Sigmoid colon (tissue), 7 donors: ENCODE measurements at regions of chr18 and their contacts with region 1.

Region 1: DNA sequence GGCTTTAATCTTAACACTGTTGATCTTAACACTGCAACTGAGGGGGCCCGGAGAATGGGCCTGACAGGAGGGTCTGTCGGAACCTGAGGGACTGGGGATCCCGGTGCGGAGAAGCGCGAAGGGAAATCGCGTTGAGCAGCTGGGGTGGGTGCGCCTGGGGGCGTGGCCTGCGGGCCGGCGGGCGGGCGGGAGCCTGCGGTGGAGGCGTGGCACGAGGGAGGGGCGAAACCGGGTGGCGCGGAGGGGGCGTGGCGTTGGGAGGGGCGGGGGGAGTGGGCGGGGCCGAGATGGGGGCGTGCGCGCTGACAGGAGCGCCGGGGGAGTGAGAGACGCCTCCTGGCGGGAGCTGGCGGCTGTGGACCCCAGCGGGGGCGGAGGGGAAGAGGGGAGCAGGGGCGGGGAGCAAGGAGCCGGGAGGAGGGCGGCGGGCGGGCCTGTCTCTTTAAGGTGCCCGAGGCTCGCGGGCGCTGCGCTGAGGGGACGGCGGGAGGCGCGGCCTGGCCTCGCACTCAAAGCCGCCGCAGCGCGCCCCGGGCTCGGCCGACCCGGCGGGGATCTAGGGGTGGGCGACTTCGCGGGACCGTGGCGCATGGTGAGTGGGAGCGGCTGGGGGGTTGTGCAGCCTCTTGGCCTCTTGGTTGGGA is at the start of gene TWSG1:
- DNase-seq: peak; percentile 98
- H3K4me3 ChIP-seq: peak within 1 kb of the TSS; percentile 76 to 98 (median 94)
- H3K27ac ChIP-seq: peak within 1 kb of the TSS; percentile 96 to 99 (median 97)
- H3K4me1 ChIP-seq: peaks cover 0 to 34% (median 19%) of the 10 kb centered on the region in 4 donors
- H3K27me3 ChIP-seq: no peaks in the 10 kb centered on the region
- CTCF ChIP-seq: peak in 2 of 4 experiments; percentile 9 to 52
- EP300 ChIP-seq: no peak
- POLR2A ChIP-seq: peak; percentile 32 to 41
- total RNA-seq, gene TWSG1: 69.2 to 88.3 (median 79.1) TPM

Region 2: DNA sequence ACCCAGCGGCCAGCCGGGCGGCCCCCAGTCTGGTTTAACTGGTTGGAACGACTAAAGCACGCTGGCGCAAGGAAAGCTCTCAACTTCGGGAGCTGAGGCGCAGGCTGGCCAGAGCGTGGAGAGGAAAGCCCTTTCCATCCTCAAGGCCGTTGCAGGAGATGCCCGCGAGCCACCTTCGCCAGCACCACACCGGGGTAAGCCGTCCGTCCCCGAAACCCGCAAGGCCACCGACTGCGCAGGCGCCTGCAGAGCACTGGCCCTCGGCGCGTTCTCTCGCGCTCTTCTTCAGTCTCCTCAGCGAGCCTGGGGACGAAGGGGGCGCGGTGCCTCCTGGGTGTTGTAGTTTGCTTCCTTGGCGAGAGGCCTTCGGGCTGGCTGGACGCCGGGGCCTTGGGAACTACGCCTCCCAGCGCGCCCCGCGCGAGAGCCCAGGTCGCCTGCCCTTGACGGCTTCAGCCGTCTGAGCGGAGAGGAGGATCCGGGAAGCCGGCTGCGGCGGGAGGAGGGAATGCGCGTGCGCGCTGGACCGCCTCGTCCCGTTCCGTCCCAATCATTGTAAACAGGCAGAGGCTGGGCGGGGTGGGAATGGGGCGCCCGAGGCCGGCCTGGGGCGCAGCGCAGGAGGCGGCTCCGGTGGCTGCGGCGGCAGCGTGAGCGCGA is 140.7 kb after region 1 on chr18 and contains the start of gene RALBP1:
- intact Hi-C with region 1: loop called (anchors 2 kb)
- DNase-seq: peak; percentile 100
- H3K4me3 ChIP-seq: peak within 1 kb of the TSS; percentile 71 to 99 (median 88)
- H3K27ac ChIP-seq: peak within 1 kb of the TSS; percentile 90 to 95 (median 92)
- H3K4me1 ChIP-seq: peaks cover 0 to 26% (median 14%) of the 10 kb centered on the region in 4 donors
- H3K27me3 ChIP-seq: no peaks in the 10 kb centered on the region
- CTCF ChIP-seq: no peak
- EP300 ChIP-seq: peak in 1 of 4 donors; percentile 8
- POLR2A ChIP-seq: peak; percentile 70 to 74
- total RNA-seq, gene RALBP1: 68.1 to 89.7 (median 86.6) TPM

Region 3: GRCh38 chr18:9516437-9517064 is 182.1 kb after region 1 on chr18:
- intact Hi-C with region 1: loop called (anchors 5 kb)
- DNase-seq: no peak
- H3K4me3 ChIP-seq: no peak overlapping the region
- H3K27ac ChIP-seq: peak overlapping the region in 2 of 4 donors; percentile 33 to 60
- H3K4me1 ChIP-seq: peaks cover 0 to 36% (median 15%) of the 10 kb centered on the region in 4 donors
- H3K27me3 ChIP-seq: no peaks in the 10 kb centered on the region
- CTCF ChIP-seq: peak; percentile 59 to 84 (median 78)
- EP300 ChIP-seq: no peak
- POLR2A ChIP-seq: no peak

Region 4: DNA sequence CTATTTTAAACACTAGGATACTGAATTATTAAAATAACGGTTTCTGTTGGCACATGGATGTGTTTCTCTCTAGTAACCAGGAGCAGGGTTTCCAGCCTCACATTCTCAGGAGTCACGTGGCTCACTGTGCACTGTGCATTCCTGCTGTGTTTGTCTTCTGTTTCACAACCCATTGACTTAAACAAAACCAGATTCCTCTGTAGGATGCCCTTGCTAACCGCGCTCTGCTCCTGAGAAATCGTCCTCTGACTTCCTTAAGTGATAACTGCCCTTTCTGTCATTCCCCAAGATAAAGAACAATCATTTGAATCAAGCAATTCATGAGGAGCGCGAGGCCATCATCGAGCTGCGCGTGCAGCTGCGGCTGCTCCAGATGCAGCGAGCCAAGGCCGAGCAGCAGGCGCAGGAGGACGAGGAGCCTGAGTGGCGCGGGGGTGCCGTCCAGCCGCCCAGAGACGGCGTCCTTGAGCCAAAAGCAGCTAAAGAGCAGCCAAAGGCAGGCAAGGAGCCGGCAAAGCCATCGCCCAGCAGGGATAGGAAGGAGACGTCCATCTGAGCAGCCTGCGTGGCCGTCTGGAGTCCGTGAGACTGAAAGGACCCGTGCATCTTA is 201.0 kb after region 1 on chr18:
- intact Hi-C with region 1: no loop called
- DNase-seq: no peak
- H3K4me3 ChIP-seq: peak overlapping the region; percentile 4 to 33 (median 25)
- H3K27ac ChIP-seq: peak overlapping the region; percentile 62 to 81 (median 78)
- H3K4me1 ChIP-seq: peaks cover 0 to 26% (median 18%) of the 10 kb centered on the region in 4 donors
- H3K27me3 ChIP-seq: no peaks in the 10 kb centered on the region
- CTCF ChIP-seq: no peak
- EP300 ChIP-seq: no peak
- POLR2A ChIP-seq: no peak